ENCODE measurements at regions of chr3 and their contacts with region 1.

Region 1: GRCh38 chr3:108406661-108407206 is 103.7 kb downstream of the MYH15 start:
- DNase-seq: peak in 5 of 14 experiments; percentile 3 to 76 (median 67)
- ATAC-seq: peak; percentile 96
- H3K4me3 ChIP-seq: no peak overlapping the region
- H3K4me3 Mint-ChIP-seq: no peak overlapping the region
- H3K27ac ChIP-seq: no peak overlapping the region
- H3K27ac Mint-ChIP-seq: no peak overlapping the region
- H3K4me1 ChIP-seq: no peaks in the 10 kb centered on the region
- H3K4me1 Mint-ChIP-seq: no peaks in the 10 kb centered on the region
- H3K27me3 ChIP-seq: no peaks in the 10 kb centered on the region
- H3K27me3 Mint-ChIP-seq: no peaks in the 10 kb centered on the region
- CTCF ChIP-seq: peak; percentile 84

Region 2: DNA sequence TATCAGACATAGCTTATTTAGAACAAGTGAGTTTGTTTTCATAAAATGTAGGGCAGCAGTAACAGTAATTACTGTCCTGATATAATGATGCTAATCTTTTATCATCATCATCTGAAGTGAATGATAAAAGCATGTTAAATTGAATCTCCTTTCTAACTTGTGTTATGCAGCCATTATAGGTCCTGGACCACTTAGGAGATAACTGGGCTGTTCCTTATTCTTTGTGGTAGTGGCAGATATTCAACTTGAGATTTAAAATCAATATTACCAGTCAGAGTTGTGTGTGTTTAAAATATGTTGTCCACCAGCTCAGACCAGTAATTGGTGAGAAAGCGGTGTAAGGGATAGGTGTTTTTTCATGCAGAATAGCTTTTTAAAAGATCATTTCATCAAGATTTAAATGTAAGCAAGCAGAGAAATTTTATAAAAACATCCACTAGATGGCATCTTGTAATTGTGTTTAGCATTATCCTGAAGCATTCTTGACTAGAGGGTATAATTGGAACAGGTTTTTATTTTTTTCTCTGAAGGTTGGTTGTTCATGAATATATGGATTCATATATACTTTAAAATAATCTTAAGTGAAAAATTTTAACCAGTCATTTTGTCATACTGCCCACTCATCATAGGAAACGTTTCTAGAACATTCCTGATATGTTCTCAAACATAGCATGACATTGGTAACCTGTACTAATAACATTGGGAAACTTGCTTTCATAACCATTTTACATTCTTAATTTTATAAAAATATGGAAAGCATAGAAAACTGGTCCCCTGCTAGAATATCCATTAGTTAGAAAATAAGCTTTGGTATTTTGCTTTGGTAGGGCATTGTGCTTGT is 730.0 kb before region 1 on chr3:
- CTCF ChIA-PET with region 1: no interaction called
- POLR2A ChIA-PET with region 1: no interaction called
- intact Hi-C with region 1: loop called (anchors 10 kb)
- DNase-seq: peak in 3 of 14 experiments; percentile 38 to 49 (median 39)
- ATAC-seq: peak; percentile 51
- H3K4me3 ChIP-seq: no peak overlapping the region
- H3K4me3 Mint-ChIP-seq: no peak overlapping the region
- H3K27ac ChIP-seq: no peak overlapping the region
- H3K27ac Mint-ChIP-seq: peak overlapping the region; percentile 8
- H3K4me1 ChIP-seq: no peaks in the 10 kb centered on the region
- H3K4me1 Mint-ChIP-seq: peaks cover 47% of the 10 kb centered on the region
- H3K27me3 ChIP-seq: no peaks in the 10 kb centered on the region
- H3K27me3 Mint-ChIP-seq: no peaks in the 10 kb centered on the region
- CTCF ChIP-seq: peak; percentile 77

Region 3: GRCh38 chr3:107753480-107753879 is 653.3 kb before region 1 on chr3:
- CTCF ChIA-PET with region 1: no interaction called
- POLR2A ChIA-PET with region 1: no interaction called
- intact Hi-C with region 1: loop called in 1 of 2 experiments (anchors 10 kb)
- DNase-seq: peak in 6 of 14 experiments; percentile 1 to 23 (median 14)
- ATAC-seq: peak; percentile 51
- H3K4me3 ChIP-seq: no peak overlapping the region
- H3K4me3 Mint-ChIP-seq: no peak overlapping the region
- H3K27ac ChIP-seq: no peak overlapping the region
- H3K27ac Mint-ChIP-seq: no peak overlapping the region
- H3K4me1 ChIP-seq: no peaks in the 10 kb centered on the region
- H3K4me1 Mint-ChIP-seq: no peaks in the 10 kb centered on the region
- H3K27me3 ChIP-seq: no peaks in the 10 kb centered on the region
- H3K27me3 Mint-ChIP-seq: no peaks in the 10 kb centered on the region
- CTCF ChIP-seq: no peak

Region 4: DNA sequence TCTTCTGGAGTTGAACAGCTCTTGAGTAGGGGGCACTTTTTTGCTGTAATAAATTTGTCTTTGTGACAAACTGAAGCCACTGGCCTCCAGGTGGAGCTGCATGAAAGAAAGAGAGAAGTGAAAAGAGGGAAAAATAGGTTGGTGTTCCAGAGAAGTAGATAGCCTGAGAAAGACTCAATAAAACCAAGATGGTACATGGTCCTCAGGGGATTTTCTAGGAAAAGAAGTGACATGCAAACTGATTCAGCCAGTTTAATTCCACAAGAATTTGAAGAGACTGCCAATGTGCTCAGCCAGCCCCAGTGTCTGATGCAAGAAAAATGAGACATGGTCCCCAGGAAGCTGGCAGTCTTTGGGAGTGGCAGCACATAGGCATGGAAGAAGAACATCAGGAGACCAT is 468.6 kb before region 1 on chr3:
- CTCF ChIA-PET with region 1: no interaction called
- POLR2A ChIA-PET with region 1: no interaction called
- intact Hi-C with region 1: loop called (anchors 1 to 5 kb)
- DNase-seq: peak in 4 of 14 experiments; percentile 30 to 45 (median 35)
- ATAC-seq: no peak
- H3K4me3 ChIP-seq: no peak overlapping the region
- H3K4me3 Mint-ChIP-seq: no peak overlapping the region
- H3K27ac ChIP-seq: no peak overlapping the region
- H3K27ac Mint-ChIP-seq: no peak overlapping the region
- H3K4me1 ChIP-seq: peaks cover 3% of the 10 kb centered on the region
- H3K4me1 Mint-ChIP-seq: peaks cover 10% of the 10 kb centered on the region
- H3K27me3 ChIP-seq: no peaks in the 10 kb centered on the region
- H3K27me3 Mint-ChIP-seq: no peaks in the 10 kb centered on the region
- CTCF ChIP-seq: peak; percentile 51

Region 5: DNA sequence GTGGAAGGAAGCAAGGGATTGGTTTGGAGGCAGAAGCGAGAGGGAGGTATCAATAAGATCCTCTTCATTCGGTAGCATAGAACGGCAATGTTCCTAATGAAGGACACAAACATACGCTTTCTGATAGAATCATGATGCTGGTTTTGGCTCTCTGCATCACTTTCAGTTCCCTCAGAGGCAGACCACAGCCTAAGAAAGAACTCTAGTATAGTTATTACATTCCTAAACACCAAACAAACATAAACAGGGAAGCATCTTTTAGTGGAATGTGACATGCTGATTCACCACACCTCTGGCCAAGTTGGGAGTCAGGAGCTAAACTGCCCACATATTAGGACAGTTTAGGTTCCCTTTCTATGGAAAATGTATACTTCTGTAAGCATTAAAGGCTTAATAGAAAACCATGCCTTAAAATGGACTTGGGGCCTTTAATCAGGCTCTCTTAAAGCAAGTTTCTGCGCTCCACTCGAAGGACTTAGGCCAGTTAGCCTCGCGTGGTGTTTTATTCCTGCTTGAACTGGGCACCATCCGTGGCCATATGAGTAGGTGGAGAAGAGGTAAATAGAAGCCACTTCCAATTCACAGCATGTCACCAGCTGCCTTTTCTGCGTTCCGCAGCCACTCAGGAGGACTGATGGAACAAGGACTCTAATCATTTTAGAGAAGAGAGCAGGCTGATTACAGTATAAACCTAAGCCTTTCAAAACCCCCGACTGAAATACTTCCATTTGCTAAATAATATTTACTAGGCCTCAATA is 369.6 kb before region 1 on chr3:
- CTCF ChIA-PET with region 1: no interaction called
- POLR2A ChIA-PET with region 1: no interaction called
- intact Hi-C with region 1: loop called in 1 of 2 experiments (anchors 10 kb)
- DNase-seq: peak in 1 of 14 experiments; percentile 13
- ATAC-seq: no peak
- H3K4me3 ChIP-seq: no peak overlapping the region
- H3K4me3 Mint-ChIP-seq: no peak overlapping the region
- H3K27ac ChIP-seq: no peak overlapping the region
- H3K27ac Mint-ChIP-seq: peak overlapping the region; percentile 72
- H3K4me1 ChIP-seq: no peaks in the 10 kb centered on the region
- H3K4me1 Mint-ChIP-seq: peaks cover 21% of the 10 kb centered on the region
- H3K27me3 ChIP-seq: no peaks in the 10 kb centered on the region
- H3K27me3 Mint-ChIP-seq: no peaks in the 10 kb centered on the region
- CTCF ChIP-seq: no peak

Region 6: GRCh38 chr3:108053067-108053466 is 353.7 kb before region 1 on chr3:
- CTCF ChIA-PET with region 1: no interaction called
- POLR2A ChIA-PET with region 1: no interaction called
- intact Hi-C with region 1: loop called in 1 of 2 experiments (anchors 10 kb)
- DNase-seq: no peak
- ATAC-seq: no peak
- H3K4me3 ChIP-seq: no peak overlapping the region
- H3K4me3 Mint-ChIP-seq: no peak overlapping the region
- H3K27ac ChIP-seq: no peak overlapping the region
- H3K27ac Mint-ChIP-seq: peak overlapping the region; percentile 74
- H3K4me1 ChIP-seq: peaks cover 11% of the 10 kb centered on the region
- H3K4me1 Mint-ChIP-seq: peaks cover 63% of the 10 kb centered on the region
- H3K27me3 ChIP-seq: no peaks in the 10 kb centered on the region
- H3K27me3 Mint-ChIP-seq: no peaks in the 10 kb centered on the region
- CTCF ChIP-seq: no peak

Region 7: DNA sequence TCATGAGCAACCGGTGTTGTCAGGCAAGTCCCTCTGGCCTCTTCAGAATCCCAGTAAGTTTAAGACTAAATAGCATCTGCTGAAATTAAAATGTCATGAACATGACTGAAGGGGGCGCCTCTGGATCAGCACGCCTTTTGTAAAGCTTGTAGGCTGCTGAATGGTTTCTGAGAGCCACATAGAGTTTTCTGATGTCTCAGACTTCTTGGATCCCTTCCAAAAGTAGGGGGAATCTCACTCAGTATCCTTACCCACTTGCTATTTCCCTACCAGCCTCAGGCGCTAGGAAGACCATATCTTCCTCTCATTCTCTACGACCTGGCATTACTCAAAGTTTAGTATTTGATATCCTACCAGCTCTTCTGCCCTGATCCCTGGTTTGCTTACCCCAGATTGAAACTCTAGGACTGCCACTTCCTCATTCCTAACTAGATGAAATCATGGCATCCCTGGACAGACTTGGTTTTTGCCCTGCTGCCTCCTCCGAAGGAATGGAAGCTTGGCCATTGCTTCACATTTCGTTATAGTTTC is 253.2 kb before region 1 on chr3:
- CTCF ChIA-PET with region 1: interaction called, 9 read pairs
- POLR2A ChIA-PET with region 1: no interaction called
- intact Hi-C with region 1: loop called (anchors 1 to 5 kb)
- DNase-seq: peak; percentile 5 to 73 (median 28)
- ATAC-seq: peak; percentile 57
- H3K4me3 ChIP-seq: no peak overlapping the region
- H3K4me3 Mint-ChIP-seq: no peak overlapping the region
- H3K27ac ChIP-seq: no peak overlapping the region
- H3K27ac Mint-ChIP-seq: no peak overlapping the region
- H3K4me1 ChIP-seq: peaks cover 4% of the 10 kb centered on the region
- H3K4me1 Mint-ChIP-seq: peaks cover 12% of the 10 kb centered on the region
- H3K27me3 ChIP-seq: no peaks in the 10 kb centered on the region
- H3K27me3 Mint-ChIP-seq: no peaks in the 10 kb centered on the region
- CTCF ChIP-seq: peak; percentile 50